ENCODE measurements at regions of chr17 and their contacts with region 1.

Region 1: DNA sequence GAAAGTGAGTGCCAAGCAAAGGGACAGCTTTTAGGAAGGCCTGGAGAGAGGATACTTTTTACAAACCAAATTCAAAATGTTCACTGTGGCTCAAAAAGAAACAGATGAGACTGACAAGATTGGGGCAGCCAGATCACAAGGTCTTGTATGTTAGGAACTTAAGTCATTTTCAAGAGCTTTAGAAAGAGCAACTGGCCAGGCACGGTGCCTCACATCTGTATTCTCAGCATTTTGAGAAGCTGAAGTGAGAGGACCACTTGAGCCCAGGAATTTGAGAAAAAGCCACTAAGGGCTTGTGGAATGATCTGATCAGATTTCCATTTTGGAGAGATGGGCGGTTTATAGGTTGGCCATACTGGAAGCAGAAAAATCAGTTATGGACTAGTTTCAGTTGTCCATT is 17.2 kb downstream of the SPAG9 start:
- DNase-seq: no peak
- H3K4me3 ChIP-seq: no peak overlapping the region
- H3K4me3 Mint-ChIP-seq: no peak overlapping the region
- H3K27ac ChIP-seq: no peak overlapping the region
- H3K27ac Mint-ChIP-seq: peak overlapping the region in 1 of 7 donors; percentile 47
- H3K4me1 ChIP-seq: no peaks in the 10 kb centered on the region
- H3K4me1 Mint-ChIP-seq: peaks cover 3% of the 10 kb centered on the region
- H3K27me3 ChIP-seq: no peaks in the 10 kb centered on the region
- H3K27me3 Mint-ChIP-seq: no peaks in the 10 kb centered on the region
- CTCF ChIP-seq: no peak

Region 2: GRCh38 chr17:51144266-51145022 is 41.0 kb after region 1 on chr17:
- intact Hi-C with region 1: loop called in 1 of 2 experiments (anchors 5 kb)
- DNase-seq: no peak
- H3K4me3 ChIP-seq: no peak overlapping the region
- H3K4me3 Mint-ChIP-seq: no peak overlapping the region
- H3K27ac ChIP-seq: no peak overlapping the region
- H3K27ac Mint-ChIP-seq: no peak overlapping the region
- H3K4me1 ChIP-seq: no peaks in the 10 kb centered on the region
- H3K4me1 Mint-ChIP-seq: peaks cover 1% of the 10 kb centered on the region
- H3K27me3 ChIP-seq: no peaks in the 10 kb centered on the region
- H3K27me3 Mint-ChIP-seq: peaks cover 0 to 4% (median 3%) of the 10 kb centered on the region in 3 donors
- CTCF ChIP-seq: no peak